ENCODE measurements at regions of chr15 and their contacts with region 1.

Region 1: GRCh38 chr15:84633311-84634227 is 20.5 kb downstream of the WDR73 start:
- DNase-seq: peak; percentile 45 to 80 (median 63)
- ATAC-seq: peak; percentile 58 to 61
- H3K4me3 Mint-ChIP-seq: peak overlapping the region; percentile 93 to 97 (median 96)
- H3K27ac Mint-ChIP-seq: peak overlapping the region; percentile 74 to 97 (median 95)
- H3K4me1 Mint-ChIP-seq: peaks cover 18 to 60% (median 54%) of the 10 kb centered on the region in 4 donors
- H3K27me3 Mint-ChIP-seq: no peaks in the 10 kb centered on the region

Region 2: DNA sequence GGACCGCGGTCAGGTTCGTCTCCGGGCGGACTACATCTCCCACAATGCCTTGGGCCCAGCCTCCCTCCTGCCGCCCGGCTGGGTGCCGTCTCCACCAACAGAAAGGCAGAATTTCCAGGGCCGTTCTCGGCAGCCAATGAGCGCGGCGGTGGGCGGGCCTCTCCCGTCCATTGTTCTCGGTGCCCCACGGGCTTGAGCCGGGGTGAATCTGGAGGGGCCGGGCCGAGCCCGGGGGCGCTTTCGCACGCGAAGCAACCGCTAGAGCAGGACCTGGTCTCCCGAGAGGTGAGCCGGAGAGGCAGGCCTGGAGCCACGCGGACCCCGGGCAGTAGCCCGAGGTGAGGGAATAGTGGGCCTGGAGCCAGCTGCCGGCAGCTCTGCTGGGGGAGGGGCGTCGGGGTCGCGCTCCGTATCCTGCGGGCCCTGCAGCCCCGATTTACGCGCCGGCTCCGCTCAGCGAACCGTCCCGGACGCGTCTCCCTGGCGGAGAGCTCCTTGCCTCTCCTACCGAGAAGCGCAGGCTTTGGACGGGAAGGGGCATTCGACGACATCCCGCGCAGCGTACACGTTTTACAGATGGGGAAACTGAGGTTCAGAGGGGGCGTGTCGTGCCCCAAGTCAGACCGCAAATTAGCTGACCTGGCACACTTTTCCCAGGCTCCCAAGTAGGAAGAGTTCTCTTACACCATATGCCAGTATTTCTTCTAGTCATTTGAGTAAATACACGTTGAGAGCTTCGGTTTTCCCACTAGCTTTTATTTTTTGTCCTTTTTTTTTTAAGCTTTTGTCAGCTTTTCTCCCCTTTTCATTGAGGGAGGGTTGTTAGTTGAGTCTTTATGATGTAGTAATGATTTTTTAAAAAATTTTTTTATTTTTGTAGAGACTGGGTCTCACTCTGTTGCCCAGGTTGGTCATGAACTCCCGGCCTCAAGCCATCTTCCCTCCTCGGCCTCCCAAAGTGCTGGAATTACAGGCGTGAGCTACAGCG is 32.4 kb before region 1 on chr15 and contains the start of gene ZSCAN2:
- POLR2A ChIA-PET with region 1: interaction called, 136 read pairs
- DNase-seq: peak; percentile 88 to 94 (median 91)
- ATAC-seq: peak; percentile 95 to 96
- H3K4me3 Mint-ChIP-seq: peak within 1 kb of the TSS; percentile 92 to 99 (median 98)
- H3K27ac Mint-ChIP-seq: peak within 1 kb of the TSS; percentile 84 to 97 (median 94)
- H3K4me1 Mint-ChIP-seq: peaks cover 32 to 79% (median 74%) of the 10 kb centered on the region in 4 donors
- H3K27me3 Mint-ChIP-seq: no peaks in the 10 kb centered on the region
- polyA plus RNA-seq, gene ZSCAN2: 5.1 to 10.1 (median 7.4) TPM

Region 3: GRCh38 chr15:84621358-84621979 is 12.1 kb before region 1 on chr15:
- POLR2A ChIA-PET with region 1: interaction called, 13 read pairs
- DNase-seq: no peak
- ATAC-seq: no peak
- H3K4me3 Mint-ChIP-seq: no peak overlapping the region
- H3K27ac Mint-ChIP-seq: no peak overlapping the region
- H3K4me1 Mint-ChIP-seq: peaks cover 2 to 8% (median 4%) of the 10 kb centered on the region in 4 donors
- H3K27me3 Mint-ChIP-seq: no peaks in the 10 kb centered on the region

Region 4: DNA sequence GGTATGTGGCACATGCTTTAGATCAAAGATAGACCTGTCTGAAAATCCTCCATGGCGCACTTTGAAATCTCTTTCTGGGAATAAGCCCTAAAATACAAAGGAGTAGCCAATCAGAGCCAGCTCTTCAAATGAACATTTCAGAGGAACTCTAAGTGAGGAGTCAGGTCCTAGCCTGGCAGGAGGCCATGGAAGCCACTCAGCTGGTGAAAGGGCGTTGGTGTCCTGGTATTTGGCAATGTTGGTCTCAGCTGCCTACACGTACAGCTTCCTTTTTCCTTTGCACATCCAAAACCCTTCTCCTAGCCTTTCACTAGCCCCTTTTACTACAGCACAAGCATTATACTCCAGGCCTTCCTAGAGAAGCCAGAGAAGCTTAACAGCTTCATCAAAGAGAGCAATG is 15.0 kb after region 1 on chr15:
- POLR2A ChIA-PET with region 1: interaction called, 127 read pairs
- DNase-seq: no peak
- ATAC-seq: no peak
- H3K4me3 Mint-ChIP-seq: no peak overlapping the region
- H3K27ac Mint-ChIP-seq: peak overlapping the region in 9 of 10 donors; percentile 15 to 75 (median 66)
- H3K4me1 Mint-ChIP-seq: peaks cover 21 to 42% (median 27%) of the 10 kb centered on the region in 4 donors
- H3K27me3 Mint-ChIP-seq: no peaks in the 10 kb centered on the region

Region 5: DNA sequence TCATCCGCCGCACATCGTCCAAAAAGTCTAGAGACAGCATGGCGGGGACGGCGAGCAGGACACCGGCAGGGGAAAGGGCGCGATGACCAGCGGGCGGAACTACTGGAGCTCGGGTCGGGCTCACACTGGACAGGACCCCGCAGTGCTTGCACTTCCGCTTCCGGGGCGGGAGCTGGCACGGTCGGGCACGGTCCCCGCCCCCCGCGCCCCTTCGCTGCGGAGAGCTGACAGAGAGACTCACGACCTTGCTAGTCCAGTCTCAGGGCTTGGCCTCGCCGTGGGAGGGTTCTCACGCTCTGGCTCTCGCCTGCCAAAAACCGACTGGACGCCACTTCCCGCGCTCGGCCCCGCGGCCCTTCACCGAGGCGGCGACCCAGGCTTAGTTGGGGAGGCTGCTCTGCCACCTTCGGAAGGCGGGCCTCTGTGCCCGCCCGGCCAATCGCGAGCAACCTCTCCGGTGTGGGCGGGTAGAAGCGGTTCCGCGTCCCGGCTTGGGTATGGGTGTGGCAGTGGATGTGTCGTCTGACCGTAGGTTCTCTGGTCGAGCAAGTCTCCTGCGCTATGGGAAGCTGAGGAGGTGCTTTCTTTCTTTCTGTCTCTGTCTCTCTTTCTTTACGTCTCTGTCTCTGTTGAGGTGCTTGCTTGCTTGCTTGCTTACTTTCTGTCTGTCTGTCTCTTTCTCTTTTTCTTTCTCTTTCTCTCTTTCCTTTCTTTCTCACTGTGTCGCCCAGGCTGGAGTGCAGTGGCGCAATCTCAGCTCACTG is 82.6 kb after region 1 on chr15 and contains the start of gene SEC11A:
- POLR2A ChIA-PET with region 1: interaction called, 10 read pairs
- DNase-seq: peak; percentile 84 to 98 (median 88)
- ATAC-seq: peak; percentile 95
- H3K4me3 Mint-ChIP-seq: peak within 1 kb of the TSS; percentile 91 to 100 (median 94)
- H3K27ac Mint-ChIP-seq: peak within 1 kb of the TSS; percentile 94 to 100 (median 97)
- H3K4me1 Mint-ChIP-seq: peaks cover 18 to 73% (median 51%) of the 10 kb centered on the region in 4 donors
- H3K27me3 Mint-ChIP-seq: no peaks in the 10 kb centered on the region
- polyA plus RNA-seq, gene SEC11A: 103 to 128 (median 119) TPM

Region 6: DNA sequence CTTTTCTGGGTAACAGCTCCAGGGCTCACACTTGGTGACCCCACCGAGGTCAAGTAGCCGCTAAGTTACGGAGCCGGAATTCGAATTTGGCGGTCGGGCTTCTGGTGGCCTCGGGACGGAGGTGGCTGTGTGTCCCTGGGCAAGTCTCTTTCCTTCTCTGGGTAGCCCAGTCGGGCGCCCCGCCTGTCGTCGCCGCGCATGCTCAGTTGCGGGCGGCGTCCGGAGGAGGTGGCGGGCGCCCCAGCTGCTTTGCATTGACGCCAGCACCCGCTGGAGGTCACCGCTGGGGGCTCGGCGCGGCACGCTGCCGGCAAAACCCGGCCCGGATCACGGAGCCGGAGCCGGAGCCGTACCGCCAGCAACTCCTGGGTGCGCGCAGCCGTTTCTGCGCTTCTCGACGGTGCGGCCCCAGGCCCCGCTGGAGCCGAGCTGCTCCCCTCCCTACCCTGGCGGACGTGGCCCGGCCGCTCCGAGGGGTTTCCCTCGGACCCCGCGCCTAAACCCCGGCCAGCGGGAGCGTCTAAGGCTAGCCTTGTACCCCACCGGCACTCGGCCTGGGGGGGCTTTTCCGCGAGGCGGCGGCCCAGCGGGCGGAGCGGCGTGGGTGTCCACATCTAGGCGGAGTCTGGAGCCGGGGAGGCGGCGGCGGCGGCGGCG is 347.6 kb after region 1 on chr15:
- POLR2A ChIA-PET with region 1: interaction called, 15 read pairs
- DNase-seq: peak in 9 of 10 donors; percentile 92 to 98 (median 96)
- ATAC-seq: peak; percentile 75 to 80
- H3K4me3 Mint-ChIP-seq: peak overlapping the region; percentile 88 to 97 (median 94)
- H3K27ac Mint-ChIP-seq: peak overlapping the region; percentile 84 to 98 (median 96)
- H3K4me1 Mint-ChIP-seq: peaks cover 7 to 44% (median 37%) of the 10 kb centered on the region in 4 donors
- H3K27me3 Mint-ChIP-seq: no peaks in the 10 kb centered on the region